H1 (cell line): ENCODE measurements at regions of chr18 and their contacts with region 1.

Region 1: DNA sequence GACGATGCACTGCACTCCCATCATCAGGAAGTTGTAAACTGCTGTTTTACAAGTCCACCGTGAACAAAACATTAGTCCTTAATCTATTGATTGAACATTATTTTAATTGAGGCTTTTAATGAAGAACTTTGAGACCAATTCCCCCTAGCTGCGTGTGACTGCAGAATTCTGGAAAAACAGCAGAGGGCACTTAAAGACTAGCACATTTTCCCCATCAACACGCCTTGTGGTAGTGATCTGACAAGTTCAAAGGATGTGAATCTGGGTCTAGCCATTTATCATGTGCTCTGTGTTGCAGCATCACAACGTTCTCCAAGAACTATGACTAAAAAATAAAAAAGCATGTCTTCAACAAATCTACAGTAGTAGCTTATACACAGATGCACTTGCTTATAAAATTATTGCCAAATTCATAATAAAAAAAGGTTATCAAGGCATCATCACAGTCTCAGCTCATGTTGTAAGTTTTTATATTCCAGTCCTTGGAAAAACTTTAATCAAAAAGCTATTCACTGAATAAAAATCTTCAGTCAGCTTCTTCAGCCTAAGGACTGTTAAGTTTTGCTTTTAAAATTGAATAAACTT is 35.8 kb downstream of the SKOR2 start:
- DNase-seq: no peak
- H3K4me3 ChIP-seq: no peak overlapping the region
- H3K27ac ChIP-seq: no peak overlapping the region
- H3K4me1 ChIP-seq: no peaks in the 10 kb centered on the region
- H3K27me3 ChIP-seq: peaks cover 0 to under 1% (median 0%) of the 10 kb centered on the region in 4 experiments; a peak in 2 of 7 replicates
- CTCF ChIP-seq: peak; percentile 12 to 92 (median 84)
- EP300 ChIP-seq: no peak
- POLR2A ChIP-seq: no peak
- RAD21 ChIP-seq: peak; percentile 97 to 98

Region 2: GRCh38 chr18:47163241-47163640 is 52.4 kb before region 1 on chr18:
- CTCF ChIA-PET with region 1: no interaction called
- POLR2A ChIA-PET with region 1: no interaction called
- DNase-seq: no peak
- H3K4me3 ChIP-seq: no peak overlapping the region
- H3K27ac ChIP-seq: no peak overlapping the region
- H3K4me1 ChIP-seq: no peaks in the 10 kb centered on the region
- H3K27me3 ChIP-seq: no peaks in the 10 kb centered on the region
- CTCF ChIP-seq: no peak
- EP300 ChIP-seq: no peak
- POLR2A ChIP-seq: no peak
- RAD21 ChIP-seq: no peak

Region 3: DNA sequence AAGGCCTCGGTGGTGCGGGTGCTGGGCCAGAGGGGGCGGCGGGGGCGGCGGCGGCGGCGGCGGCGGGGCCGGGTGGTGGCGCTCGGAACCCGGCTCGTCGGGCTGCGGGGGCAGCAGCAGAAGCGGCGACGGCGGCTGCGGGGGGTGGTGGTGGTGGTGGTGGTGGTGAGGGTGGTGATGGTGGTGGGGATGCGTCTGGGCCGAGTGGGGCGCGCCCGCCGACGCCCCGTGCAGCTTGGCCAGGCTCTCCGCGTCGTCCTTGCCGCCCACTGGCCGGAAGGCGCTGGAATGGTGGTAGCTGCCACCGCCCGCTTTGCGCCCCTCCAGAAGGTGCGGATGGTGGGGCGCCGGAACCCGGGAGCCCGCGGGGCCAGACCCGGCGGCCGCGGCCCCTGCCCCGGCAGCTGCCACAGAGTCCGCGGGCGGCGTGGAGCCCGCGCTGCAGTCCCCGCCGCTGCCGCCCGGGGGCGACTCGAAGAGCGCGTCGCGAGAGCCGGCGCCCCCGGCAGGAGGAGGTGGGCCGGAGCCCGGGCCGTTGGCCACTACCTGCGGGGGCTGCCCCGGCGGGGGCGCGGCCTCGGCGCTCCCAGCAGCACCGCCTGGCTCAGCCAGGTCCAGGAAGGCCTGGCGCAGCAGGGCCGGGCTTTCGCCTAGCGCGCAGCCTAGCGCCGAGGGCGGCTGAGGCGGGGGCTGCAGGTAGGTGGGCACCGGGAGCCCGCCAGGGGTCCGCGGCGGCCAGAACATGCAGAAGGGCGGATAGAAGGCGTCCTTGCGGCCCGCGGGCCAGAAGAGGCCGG is 31.6 kb after region 1 on chr18:
- CTCF ChIA-PET with region 1: interaction called, 12 read pairs
- POLR2A ChIA-PET with region 1: no interaction called
- DNase-seq: peak in 1 of 2 experiments; percentile 83
- H3K4me3 ChIP-seq: peak overlapping the region; percentile 39 to 60 (median 47); a peak in 7 of 8 replicates
- H3K27ac ChIP-seq: no peak overlapping the region
- H3K4me1 ChIP-seq: peaks cover 9 to 23% (median 9%) of the 10 kb centered on the region in 4 experiments; a peak in 6 of 7 replicates
- H3K27me3 ChIP-seq: peaks cover 47 to 50% (median 49%) of the 10 kb centered on the region in 4 experiments
- CTCF ChIP-seq: peak; percentile 56 to 90 (median 70)
- EP300 ChIP-seq: no peak
- POLR2A ChIP-seq: no peak
- RAD21 ChIP-seq: peak; percentile 5 to 42; a peak in 2 of 4 replicates

Region 4: GRCh38 chr18:47254341-47254939 is 38.8 kb after region 1 on chr18:
- CTCF ChIA-PET with region 1: interaction called, 13 read pairs
- POLR2A ChIA-PET with region 1: no interaction called
- DNase-seq: peak in 1 of 2 experiments; percentile 96
- H3K4me3 ChIP-seq: peak overlapping the region in 3 of 4 experiments; percentile 6 to 36 (median 11); a peak in 4 of 8 replicates
- H3K27ac ChIP-seq: no peak overlapping the region
- H3K4me1 ChIP-seq: peaks cover 13 to 33% (median 22%) of the 10 kb centered on the region in 4 experiments; a peak in 6 of 7 replicates
- H3K27me3 ChIP-seq: peaks cover 81 to 100% (median 87%) of the 10 kb centered on the region in 4 experiments
- CTCF ChIP-seq: no peak
- EP300 ChIP-seq: no peak
- POLR2A ChIP-seq: no peak
- RAD21 ChIP-seq: no peak; a peak in 1 of 4 replicates

Region 5: DNA sequence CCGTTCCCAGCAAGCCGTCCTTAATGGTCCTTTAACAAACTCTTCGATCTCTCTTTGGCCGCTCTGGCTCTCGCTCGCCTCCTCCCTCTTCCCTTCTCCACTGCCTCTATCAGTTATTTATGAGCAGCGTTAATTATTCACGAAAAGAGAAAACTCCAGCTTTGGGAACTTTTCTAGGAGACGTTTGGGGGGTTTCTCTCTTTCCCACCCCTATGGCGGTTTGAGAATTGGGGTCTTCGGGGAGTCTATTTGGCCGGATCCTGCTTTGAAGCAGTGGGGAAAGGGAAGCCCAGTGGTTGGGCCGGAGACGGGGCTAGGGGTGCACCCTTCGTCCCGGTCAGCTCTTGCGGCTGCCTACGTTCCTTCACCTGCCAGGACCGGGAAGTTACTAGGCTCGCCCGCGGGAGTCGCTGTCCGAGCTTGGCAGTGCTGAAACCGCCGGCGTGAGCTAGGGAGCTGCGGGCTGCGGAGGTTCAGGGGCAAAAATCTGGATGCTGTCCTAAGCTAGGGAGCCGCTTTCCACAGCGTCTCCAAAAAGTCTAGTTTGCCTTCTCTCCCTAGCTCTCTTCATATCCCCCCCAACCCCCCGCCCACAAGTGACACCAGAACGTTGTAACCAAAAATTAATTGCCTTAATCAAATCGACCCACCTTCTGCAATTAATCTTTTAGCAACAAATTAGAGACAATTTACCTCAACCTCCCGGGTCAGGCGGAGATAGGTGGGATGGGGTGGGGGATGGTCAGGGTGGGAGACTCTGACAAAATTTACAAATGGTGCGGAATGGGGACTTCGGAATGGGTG is 44.7 kb after region 1 on chr18:
- CTCF ChIA-PET with region 1: interaction called, 27 read pairs
- POLR2A ChIA-PET with region 1: no interaction called
- DNase-seq: peak in 1 of 2 experiments; percentile 95
- H3K4me3 ChIP-seq: peak overlapping the region in 1 of 4 experiments; percentile 84; a peak in 2 of 8 replicates
- H3K27ac ChIP-seq: no peak overlapping the region
- H3K4me1 ChIP-seq: peaks cover 8 to 28% (median 16%) of the 10 kb centered on the region in 4 experiments
- H3K27me3 ChIP-seq: peaks cover 71 to 100% (median 84%) of the 10 kb centered on the region in 4 experiments
- CTCF ChIP-seq: no peak
- EP300 ChIP-seq: no peak
- POLR2A ChIP-seq: no peak
- RAD21 ChIP-seq: peak; percentile 10 to 14; a peak in 2 of 4 replicates

Region 6: DNA sequence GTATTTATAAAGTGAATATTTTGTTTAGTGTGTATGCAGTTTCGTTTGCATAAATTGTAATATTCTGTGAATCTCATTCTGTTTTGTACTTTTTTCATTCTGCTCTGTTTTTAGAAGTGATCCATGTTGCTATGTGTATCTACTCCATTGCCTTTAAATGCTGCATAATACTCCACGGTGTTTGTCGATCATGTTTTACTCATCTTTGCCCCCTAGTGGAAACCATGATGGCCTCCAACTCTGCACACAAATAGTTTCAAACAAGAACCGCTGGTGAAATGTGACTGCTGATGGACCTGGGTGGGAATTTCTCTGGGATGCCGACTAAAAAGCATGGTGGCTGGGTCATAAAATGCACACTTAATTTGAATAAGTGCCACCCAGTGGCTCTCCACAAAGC is 67.8 kb after region 1 on chr18:
- CTCF ChIA-PET with region 1: interaction called, 14 read pairs
- POLR2A ChIA-PET with region 1: no interaction called
- DNase-seq: no peak
- H3K4me3 ChIP-seq: no peak overlapping the region
- H3K27ac ChIP-seq: no peak overlapping the region
- H3K4me1 ChIP-seq: no peaks in the 10 kb centered on the region
- H3K27me3 ChIP-seq: no peaks in the 10 kb centered on the region; a peak in 1 of 7 replicates
- CTCF ChIP-seq: peak in 2 of 3 experiments; percentile 66 to 70; a peak in 3 of 4 replicates
- EP300 ChIP-seq: no peak
- POLR2A ChIP-seq: no peak
- RAD21 ChIP-seq: peak; percentile 58 to 61